ENCODE measurements at regions of chr2 and their contacts with region 1.

Region 1: DNA sequence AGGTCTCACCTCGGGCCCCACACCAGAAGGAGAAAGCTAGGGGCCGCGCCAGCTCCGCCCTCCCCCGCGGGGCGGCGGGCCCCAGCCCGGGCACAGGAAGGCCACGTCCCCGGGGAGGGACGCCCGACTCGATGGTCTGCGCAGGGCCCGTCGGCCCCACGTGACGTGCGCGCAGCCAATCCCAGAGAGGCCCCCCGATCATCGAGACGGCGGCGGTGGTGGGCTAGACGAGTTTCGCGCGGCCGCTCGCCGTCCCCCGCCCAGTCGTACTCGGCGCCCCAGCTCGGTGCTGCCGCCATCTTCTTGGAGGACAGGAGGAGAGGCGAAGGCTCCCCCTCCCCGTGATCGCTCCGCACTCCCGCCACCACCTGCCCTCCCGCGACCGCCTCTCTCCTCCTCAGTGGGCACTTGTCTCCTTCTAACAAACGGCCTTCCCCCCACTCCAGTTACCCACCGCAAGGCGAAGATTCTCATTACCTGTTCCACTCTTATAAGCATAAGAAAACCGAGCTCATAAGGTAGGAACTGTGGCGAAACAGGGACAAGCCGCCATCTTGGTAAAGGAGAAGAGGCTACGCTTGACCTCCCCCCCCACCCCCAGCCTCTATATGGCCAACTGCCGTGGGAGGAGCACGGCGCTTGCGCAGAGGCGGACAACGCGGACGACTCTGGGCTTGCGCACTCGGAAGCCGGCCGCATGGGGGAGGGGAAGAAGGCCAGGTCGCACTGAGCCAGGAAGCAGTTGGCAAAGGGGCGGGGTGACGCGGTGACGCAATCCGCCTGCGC is at the start of gene HDLBP:
- DNase-seq: peak; percentile 98
- ATAC-seq: peak; percentile 90
- H3K4me3 ChIP-seq: peak within 1 kb of the TSS; percentile 92 to 96 (median 96)
- H3K27ac ChIP-seq: peak within 1 kb of the TSS; percentile 97
- H3K4me1 ChIP-seq: peaks cover 75% of the 10 kb centered on the region
- H3K27me3 ChIP-seq: no peaks in the 10 kb centered on the region; a peak in 1 of 5 replicates
- CTCF ChIP-seq: peak; percentile 96
- EP300 ChIP-seq: peak in 1 of 2 experiments; percentile 36; a peak in 3 of 4 replicates
- POLR2A ChIP-seq: peak; percentile 65 to 84; a peak in 3 of 4 replicates
- RAD21 ChIP-seq: no peak; the same call in 1 of the 2 replicates
- total RNA-seq, gene HDLBP: 707 and 912 TPM in 2 replicates

Region 2: DNA sequence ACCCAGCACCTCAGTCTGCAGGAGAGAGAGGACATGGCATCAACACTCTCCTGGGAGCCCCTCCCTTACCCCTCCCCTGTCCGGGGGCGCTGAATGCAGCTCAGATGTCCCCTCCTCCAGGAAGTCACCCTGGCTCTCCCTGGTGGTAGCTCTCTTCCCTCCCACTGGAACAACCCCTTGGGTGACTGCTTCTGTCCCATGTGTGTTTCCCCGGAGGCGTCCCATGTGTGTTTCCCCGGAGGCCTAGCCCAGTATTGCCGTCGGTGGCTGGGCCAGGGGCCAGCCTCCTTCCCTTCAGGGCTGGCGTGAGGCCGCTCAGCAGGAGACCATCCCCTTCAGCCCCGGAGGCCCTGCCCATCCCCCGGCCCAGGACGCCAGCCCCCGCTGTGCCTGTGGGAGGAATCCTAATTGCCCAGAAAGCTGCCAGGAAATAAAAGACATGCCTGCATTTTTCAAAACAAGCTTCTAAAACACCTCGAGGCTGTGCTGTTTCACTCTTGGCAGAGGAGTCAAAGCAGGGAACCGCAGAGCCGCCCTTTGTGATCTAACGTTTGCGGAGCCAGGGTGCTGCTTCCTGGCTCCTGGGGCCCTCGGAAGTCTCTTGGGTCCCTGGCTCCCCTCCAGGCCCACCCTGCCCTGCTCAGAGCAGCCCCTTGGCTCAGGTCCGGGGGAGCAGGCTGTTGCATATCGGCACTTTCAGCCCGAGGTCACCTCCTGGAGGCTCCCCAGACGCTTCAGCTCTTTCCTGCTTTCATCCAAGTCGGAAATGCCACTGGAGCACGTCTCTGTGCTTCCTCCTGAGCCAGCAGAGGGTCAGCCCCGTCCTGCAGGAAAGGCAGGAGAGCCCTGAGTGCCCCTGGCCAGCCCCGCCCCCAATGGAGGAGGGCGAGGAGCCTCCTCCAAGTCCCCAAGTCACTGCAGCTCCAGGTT is 305.4 kb before region 1 on chr2:
- CTCF ChIA-PET with region 1: no interaction called
- POLR2A ChIA-PET with region 1: no interaction called
- in situ Hi-C with region 1: no loop called
- intact Hi-C with region 1: no loop called
- DNase-seq: no peak
- ATAC-seq: peak; percentile 67
- H3K4me3 ChIP-seq: peak overlapping the region; percentile 23 to 67 (median 37); a peak in 5 of 6 replicates
- H3K27ac ChIP-seq: no peak overlapping the region
- H3K4me1 ChIP-seq: peaks cover 16% of the 10 kb centered on the region
- H3K27me3 ChIP-seq: peaks cover 2 to 34% of the 10 kb centered on the region in 2 experiments; a peak in 4 of 5 replicates
- CTCF ChIP-seq: no peak; the same call in 1 of the 2 replicates
- EP300 ChIP-seq: no peak
- POLR2A ChIP-seq: no peak
- RAD21 ChIP-seq: no peak

Region 3: DNA sequence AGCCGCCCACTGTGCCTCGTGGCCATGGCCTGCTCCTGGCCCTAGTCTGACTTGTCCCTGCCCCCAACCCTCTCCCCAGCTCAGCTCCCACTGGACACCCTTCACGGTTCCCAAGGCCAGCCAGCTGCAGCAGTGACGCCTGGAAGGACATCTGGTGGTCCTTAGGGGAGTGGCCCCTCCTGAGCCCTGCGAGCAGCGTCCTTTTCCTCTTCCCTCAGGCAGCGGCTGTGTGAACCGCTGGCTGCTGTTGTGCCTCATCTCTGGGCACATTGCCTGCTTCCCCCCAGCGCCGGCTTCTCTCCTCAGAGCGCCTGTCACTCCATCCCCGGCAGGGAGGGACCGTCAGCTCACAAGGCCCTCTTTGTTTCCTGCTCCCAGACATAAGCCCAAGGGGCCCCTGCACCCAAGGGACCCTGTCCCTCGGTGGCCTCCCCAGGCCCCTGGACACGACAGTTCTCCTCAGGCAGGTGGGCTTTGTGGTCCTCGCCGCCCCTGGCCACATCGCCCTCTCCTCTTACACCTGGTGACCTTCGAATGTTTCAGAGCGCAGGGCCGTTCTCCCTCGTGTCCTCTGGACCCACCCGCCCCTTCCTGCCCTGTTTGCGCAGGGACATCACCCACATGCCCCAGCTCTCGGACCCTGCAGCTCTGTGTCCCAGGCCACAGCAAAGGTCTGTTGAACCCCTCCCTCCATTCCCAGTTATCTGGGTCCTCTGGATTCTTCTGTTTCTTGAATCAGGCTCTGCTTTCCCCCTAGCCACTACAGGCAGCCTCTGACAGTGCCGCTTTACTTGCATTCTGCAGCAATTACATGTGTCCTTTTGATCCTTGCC is 91.1 kb before region 1 on chr2:
- CTCF ChIA-PET with region 1: no interaction called
- POLR2A ChIA-PET with region 1: interaction called, 21 read pairs
- in situ Hi-C with region 1: no loop called
- intact Hi-C with region 1: no loop called
- DNase-seq: peak; percentile 87
- ATAC-seq: peak; percentile 73
- H3K4me3 ChIP-seq: peak overlapping the region; percentile 19 to 70 (median 24); a peak in 5 of 6 replicates
- H3K27ac ChIP-seq: peak overlapping the region; percentile 78
- H3K4me1 ChIP-seq: peaks cover 62% of the 10 kb centered on the region
- H3K27me3 ChIP-seq: no peaks in the 10 kb centered on the region
- CTCF ChIP-seq: peak; percentile 42
- EP300 ChIP-seq: no peak; a peak in 1 of 4 replicates
- POLR2A ChIP-seq: no peak; a peak in 1 of 4 replicates
- RAD21 ChIP-seq: peak; percentile 14

Region 4: GRCh38 chr2:241289597-241289996 is 25.7 kb before region 1 on chr2:
- CTCF ChIA-PET with region 1: no interaction called
- POLR2A ChIA-PET with region 1: interaction called, 30 read pairs
- in situ Hi-C with region 1: no loop called
- intact Hi-C with region 1: no loop called
- DNase-seq: no peak
- ATAC-seq: no peak
- H3K4me3 ChIP-seq: no peak overlapping the region
- H3K27ac ChIP-seq: no peak overlapping the region
- H3K4me1 ChIP-seq: peaks cover 62% of the 10 kb centered on the region
- H3K27me3 ChIP-seq: no peaks in the 10 kb centered on the region
- CTCF ChIP-seq: peak; percentile 31
- EP300 ChIP-seq: no peak
- POLR2A ChIP-seq: no peak
- RAD21 ChIP-seq: no peak

Region 5: DNA sequence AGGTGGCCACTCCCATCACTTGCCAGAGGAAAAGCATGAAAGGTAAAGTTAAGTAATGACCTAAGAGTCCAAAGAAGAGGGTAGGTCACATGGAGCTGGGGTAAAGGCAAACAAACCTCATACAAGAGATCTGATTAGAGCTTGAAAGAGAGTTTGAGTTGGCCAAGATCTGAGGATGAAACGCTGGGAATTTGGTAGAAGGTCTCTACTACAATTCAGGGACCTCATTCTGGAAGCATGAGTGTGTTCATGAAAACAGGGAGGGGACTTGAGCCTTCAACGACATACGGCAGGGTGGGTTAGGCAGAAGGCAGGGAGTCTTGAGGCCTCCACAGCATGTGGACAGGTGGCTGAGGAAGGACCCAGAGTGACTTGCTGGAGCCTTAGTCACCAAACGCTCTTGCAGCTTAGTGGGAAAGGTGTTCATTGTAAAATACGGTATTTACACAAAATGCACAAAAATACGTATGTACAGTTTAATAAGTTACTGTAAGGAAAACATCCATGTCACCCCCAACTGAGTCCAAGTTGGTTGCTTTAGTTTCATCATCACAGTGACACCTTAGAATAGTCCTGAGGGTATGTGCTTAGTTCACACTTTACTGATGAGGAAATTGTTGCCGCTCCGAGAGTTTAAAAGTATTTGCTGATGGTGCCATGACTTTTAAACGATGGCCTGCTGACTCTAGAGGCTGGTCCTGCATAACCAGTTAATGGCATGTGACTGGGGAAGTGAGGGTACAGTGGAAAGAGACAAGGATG is 35.8 kb after region 1 on chr2:
- CTCF ChIA-PET with region 1: no interaction called
- POLR2A ChIA-PET with region 1: interaction called, 55 read pairs
- in situ Hi-C with region 1: loop called (anchors 5 kb)
- intact Hi-C with region 1: loop called (anchors 2 kb)
- DNase-seq: peak; percentile 93
- ATAC-seq: peak; percentile 57
- H3K4me3 ChIP-seq: peak overlapping the region in 2 of 3 experiments; percentile 12 to 44; a peak in 1 of 6 replicates
- H3K27ac ChIP-seq: peak overlapping the region; percentile 86
- H3K4me1 ChIP-seq: peaks cover 65% of the 10 kb centered on the region
- H3K27me3 ChIP-seq: no peaks in the 10 kb centered on the region
- CTCF ChIP-seq: no peak
- EP300 ChIP-seq: peak; percentile 22 to 85; a peak in 2 of 4 replicates
- POLR2A ChIP-seq: 0 out of 4 replicates have a peak, but pooled peaks of 1 of the 2 experiments have one; percentile 30
- RAD21 ChIP-seq: no peak

Region 6: DNA sequence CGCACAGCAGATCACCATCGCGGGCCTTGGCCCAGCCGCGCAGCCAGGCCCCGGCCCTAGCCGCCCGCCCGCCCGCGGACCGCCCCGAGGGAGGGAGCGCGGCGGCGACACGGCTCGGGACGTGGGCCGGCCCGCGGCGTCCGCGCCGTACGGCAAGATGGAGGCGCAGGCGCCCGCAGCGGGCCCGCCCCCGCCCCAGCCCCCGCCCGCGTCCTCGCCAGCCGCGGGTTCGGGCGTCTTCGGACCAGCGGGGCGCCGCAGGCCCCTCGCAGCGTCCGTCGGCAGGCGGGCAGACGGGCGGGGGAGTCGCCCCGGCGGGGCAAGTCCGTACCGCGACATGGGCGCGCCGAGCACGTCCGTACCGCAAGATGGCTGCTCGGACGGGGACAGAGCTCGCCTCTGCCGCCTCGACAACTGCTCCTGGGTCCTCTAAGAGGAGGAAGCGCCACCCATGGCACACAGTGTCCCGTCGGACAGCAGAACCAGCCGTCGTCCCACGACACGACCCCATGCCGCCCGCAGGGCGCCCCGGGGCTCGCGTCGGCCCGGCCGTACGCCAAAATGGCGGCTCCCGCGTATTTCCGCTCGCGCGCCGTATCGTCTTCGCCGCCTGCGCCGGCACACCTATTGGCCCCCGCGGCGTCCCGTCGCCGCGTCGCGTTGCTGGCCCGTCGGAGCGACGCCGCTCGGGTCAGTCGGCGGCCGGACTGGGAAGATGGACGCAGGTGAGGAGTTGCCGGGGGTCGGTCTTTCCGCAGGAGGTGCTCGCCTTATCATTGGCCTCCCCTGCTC is 321.9 kb after region 1 on chr2 and contains the starts of genes ATG4B and THAP4:
- CTCF ChIA-PET with region 1: no interaction called
- POLR2A ChIA-PET with region 1: no interaction called
- in situ Hi-C with region 1: no loop called
- intact Hi-C with region 1: loop called (anchors 2 kb)
- DNase-seq: peak; percentile 76
- ATAC-seq: peak; percentile 76
- H3K4me3 ChIP-seq: peak within 1 kb of the TSS; percentile 95 to 100 (median 99)
- H3K27ac ChIP-seq: peak within 1 kb of the TSS; percentile 100
- H3K4me1 ChIP-seq: peaks cover 55% of the 10 kb centered on the region
- H3K27me3 ChIP-seq: no peaks in the 10 kb centered on the region; a peak in 1 of 5 replicates
- CTCF ChIP-seq: 0 out of 2 replicates have a peak, but pooled peaks have one; percentile 4
- EP300 ChIP-seq: no peak; a peak in 2 of 4 replicates
- POLR2A ChIP-seq: peak in 1 of 2 experiments; percentile 90; a peak in 2 of 4 replicates
- RAD21 ChIP-seq: peak; percentile 68
- total RNA-seq, gene ATG4B: 95.5 and 96.3 TPM in 2 replicates
- total RNA-seq, gene THAP4: 68.2 and 75.7 TPM in 2 replicates

Measured in HepG2 (cell line).